ENCODE measurements at regions of chr15 and their contacts with region 1.

Region 1: DNA sequence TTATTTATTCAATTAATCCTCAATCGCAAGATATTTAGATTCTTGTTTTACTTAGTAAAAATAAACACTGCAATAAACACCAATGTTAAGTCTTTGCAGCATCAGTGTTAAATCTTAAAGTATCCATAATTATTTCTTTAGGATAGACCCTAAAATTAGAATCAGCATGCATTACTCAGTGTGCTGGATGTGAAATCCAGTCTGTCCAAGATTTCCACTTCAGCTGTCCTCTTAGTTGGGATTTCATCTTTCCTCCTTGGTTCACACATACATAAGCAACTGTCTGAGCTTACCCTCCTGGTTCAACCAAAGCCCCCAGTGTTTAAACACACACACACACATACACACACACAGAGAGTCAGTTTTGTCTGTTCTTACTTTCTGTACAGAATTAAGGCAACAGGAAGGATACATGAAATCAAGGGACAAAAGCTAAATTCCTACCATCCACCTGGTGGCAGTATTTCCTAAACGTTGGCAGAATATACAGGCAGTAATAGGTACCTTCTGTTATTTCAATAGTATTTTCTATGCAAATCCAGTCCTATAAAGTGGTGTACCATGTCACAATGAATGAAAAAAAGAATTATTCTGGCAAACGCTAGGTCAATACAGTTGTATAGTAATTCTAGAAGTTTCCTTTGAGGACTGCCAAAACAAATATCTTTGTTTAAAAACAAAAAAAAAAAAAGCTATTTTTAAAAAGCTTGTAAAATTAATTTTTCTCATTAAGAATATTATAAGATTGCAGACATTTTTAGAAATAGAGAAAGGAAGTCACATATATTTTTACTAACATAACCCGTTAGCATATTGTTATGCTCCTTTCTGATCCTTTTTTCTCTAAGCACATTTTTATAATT is 27.3 kb upstream of the DMXL2 start:
- DNase-seq: peak; percentile 10
- H3K4me3 Mint-ChIP-seq: no peak overlapping the region
- H3K27ac Mint-ChIP-seq: no peak overlapping the region
- H3K4me1 Mint-ChIP-seq: no peaks in the 10 kb centered on the region
- H3K27me3 Mint-ChIP-seq: no peaks in the 10 kb centered on the region

Region 2: DNA sequence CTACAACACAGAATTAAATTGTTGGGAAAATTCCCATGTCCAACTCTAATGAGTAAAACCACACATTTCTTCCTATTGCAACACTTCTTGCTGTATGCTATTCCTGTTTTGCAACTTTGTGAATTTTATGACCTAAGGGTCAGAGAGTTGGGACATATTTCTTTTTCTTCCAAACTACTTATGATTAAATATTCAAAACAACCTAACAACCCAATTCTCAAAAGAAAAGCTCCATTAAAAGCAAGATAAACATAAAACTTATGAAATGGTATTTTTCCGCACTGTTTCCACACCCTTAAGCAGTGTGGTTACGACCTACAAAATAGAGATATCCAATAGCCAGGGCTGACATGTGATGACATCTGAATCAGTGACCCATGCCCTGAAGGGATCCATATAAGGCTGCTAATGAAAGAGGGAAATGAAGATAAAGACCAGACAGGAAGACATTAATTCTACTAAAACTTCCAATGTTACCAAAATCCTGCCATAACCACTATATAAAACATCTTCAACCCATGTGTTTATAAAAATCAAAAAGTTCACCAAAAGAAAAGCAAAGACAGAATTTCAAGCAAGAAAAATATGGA is 72.9 kb before region 1 on chr15:
- CTCF ChIA-PET with region 1: no interaction called
- POLR2A ChIA-PET with region 1: no interaction called
- intact Hi-C with region 1: no loop called
- DNase-seq: no peak
- H3K4me3 Mint-ChIP-seq: no peak overlapping the region
- H3K27ac Mint-ChIP-seq: no peak overlapping the region
- H3K4me1 Mint-ChIP-seq: no peaks in the 10 kb centered on the region
- H3K27me3 Mint-ChIP-seq: no peaks in the 10 kb centered on the region

Region 3: DNA sequence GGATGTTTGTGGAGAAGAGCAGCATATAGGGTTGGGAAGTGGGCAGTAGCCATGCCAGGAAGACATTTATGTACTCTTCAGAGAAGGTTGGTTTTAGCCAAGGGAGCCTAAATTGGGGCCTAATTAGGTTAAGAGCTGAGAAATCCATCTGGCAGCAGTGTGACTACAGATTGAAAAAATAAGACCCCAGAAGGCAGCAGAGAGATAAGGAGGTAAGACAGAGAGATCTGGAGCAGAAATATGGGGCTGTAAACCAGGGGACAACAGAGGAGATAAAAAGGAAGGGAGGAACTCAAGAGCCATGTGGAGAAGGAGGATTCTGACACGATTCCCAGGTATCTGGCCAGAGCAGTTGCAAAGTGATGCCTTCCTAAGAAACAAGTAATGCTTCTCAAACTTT is 64.3 kb after region 1 on chr15:
- CTCF ChIA-PET with region 1: no interaction called
- POLR2A ChIA-PET with region 1: no interaction called
- intact Hi-C with region 1: no loop called
- DNase-seq: no peak
- H3K4me3 Mint-ChIP-seq: no peak overlapping the region
- H3K27ac Mint-ChIP-seq: no peak overlapping the region
- H3K4me1 Mint-ChIP-seq: no peaks in the 10 kb centered on the region
- H3K27me3 Mint-ChIP-seq: no peaks in the 10 kb centered on the region

Region 4: DNA sequence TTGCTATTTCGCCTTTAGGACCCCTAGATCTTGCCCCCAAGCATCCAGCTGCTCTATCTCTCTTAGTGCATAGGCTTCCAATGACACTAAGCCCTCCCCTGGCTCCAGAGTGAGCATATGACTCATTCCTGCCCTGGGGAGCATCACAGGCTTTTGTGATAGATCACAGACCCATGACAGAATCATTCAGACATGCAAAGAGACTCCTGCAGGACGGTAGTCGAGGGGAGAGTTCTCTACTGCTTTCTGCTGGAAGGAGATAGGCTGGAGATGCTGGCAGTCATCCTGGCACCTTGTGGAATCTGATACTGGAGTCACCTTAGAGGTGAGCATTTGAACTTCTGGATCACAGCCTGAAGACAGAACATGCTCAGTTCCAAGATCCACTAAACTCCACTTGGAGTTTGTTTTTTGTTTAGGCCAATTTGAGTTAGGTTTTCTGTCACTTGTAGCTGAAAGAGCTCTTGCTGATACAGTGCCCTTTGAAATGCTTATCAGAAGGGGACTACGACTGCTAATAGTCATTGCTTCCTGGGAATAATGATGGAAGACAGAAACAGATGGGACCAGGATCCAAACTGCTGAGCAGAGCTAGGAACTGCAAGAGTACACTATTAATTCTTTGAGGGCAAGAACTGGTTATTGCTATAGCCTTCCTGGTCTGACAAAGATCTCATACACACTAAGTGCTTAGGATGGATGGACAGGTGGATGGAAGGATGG is 76.6 kb after region 1 on chr15:
- CTCF ChIA-PET with region 1: interaction called, 11 read pairs
- POLR2A ChIA-PET with region 1: no interaction called
- intact Hi-C with region 1: no loop called
- DNase-seq: peak; percentile 69
- H3K4me3 Mint-ChIP-seq: no peak overlapping the region
- H3K27ac Mint-ChIP-seq: no peak overlapping the region
- H3K4me1 Mint-ChIP-seq: peaks cover 64% of the 10 kb centered on the region
- H3K27me3 Mint-ChIP-seq: no peaks in the 10 kb centered on the region

Region 5: DNA sequence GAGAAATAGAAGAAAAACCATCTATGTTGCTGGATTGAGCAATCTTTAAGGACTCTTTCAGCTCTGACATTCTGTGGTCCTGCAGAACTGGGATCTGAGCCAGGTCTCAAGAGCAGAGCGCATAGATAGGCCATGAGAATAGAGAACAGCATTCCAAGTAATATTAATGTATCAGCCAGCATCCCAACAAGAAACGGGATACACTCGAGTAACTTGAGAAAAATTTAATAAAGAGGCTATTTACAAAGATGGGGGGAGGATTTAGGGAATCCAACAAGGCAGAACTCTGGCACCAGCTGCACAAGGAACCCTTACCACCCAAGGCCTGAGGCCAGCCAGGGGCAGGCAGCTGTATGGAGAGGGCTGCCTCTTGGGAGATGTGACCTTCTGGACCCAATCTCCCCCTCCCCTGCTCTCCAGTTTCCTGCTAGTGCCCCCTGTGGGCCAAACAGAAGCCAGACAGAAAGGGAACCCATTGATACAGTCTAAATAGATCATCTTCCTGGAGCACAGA is 109.7 kb after region 1 on chr15:
- CTCF ChIA-PET with region 1: interaction called, 12 read pairs
- POLR2A ChIA-PET with region 1: no interaction called
- intact Hi-C with region 1: no loop called
- DNase-seq: peak; percentile 31
- H3K4me3 Mint-ChIP-seq: no peak overlapping the region
- H3K27ac Mint-ChIP-seq: no peak overlapping the region
- H3K4me1 Mint-ChIP-seq: peaks cover 2% of the 10 kb centered on the region
- H3K27me3 Mint-ChIP-seq: no peaks in the 10 kb centered on the region

Region 6: DNA sequence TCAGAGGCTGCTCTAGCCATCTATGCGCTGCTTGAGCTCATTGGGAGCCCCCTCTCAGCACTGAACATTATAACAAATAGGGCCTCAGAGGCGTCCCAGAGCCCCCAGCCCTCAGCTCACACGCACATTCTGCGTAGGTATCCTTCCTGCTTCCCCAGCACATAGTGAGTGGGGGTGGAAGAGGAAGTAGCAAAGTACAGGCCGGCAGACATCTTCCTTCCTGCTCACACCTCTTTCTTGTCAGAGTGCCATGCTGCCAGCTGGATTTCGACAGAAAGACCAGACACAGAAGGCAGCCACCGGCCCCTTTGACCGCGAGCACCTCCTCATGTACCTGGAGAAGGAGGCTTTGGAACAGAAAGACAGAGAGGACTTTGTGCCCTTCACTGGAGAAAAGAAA is 118.1 kb after region 1 on chr15:
- CTCF ChIA-PET with region 1: interaction called, 406 read pairs
- POLR2A ChIA-PET with region 1: no interaction called
- intact Hi-C with region 1: no loop called
- DNase-seq: no peak
- H3K4me3 Mint-ChIP-seq: no peak overlapping the region
- H3K27ac Mint-ChIP-seq: no peak overlapping the region
- H3K4me1 Mint-ChIP-seq: peaks cover 7% of the 10 kb centered on the region
- H3K27me3 Mint-ChIP-seq: no peaks in the 10 kb centered on the region

Measured in activated CD4-positive, alpha-beta memory T cell treated with anti-CD3 and anti-CD28 coated beads for 36 hours (primary cell).